Heart right ventricle (tissue), 16 donors: ENCODE measurements at regions of chr20 and their contacts with region 1.

Region 1: DNA sequence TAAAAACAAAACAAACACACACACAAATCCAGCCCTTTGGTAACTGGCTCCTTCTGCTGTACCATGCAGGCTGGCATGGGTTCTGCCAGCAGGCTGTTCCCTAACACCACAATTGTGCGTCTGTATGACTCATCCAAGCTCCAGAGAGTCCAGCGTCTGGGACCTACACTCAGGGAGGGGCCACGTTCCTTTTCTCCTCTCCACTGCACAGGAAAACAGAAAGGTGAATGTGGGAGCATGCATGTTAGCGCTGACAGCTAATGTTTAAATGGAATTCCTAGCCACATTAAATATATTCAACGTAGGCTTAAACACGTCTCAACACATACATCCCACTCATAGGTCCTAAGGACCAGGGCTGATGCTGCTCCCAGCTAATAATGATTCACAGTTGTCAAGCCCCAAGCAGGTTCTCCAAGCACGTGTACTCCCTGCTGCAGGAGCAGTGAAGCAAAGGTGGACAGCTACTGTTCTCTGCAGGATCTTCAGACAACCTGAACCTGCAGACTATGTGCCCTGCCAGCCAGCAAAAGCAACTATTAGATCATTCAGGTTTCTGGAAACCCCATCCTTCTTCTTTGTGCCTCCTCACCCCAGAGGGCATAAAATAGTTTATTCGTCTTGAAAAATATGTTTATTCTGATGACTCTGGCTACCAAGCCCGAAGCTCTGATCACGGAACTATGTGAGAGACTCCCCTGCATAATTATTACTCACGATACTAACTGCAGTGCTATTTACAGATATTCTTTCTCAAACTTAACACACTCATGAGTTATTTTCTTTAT is 20.9 kb downstream of the MAP1LC3A start:
- DNase-seq: peak; percentile 56 to 60
- ATAC-seq: peak; percentile 80 to 94 (median 90)
- H3K4me3 ChIP-seq: no peak overlapping the region
- H3K27ac ChIP-seq: peak overlapping the region; percentile 51 to 86 (median 76)
- H3K4me1 ChIP-seq: peaks cover 11 to 59% (median 54%) of the 10 kb centered on the region in 9 donors
- H3K27me3 ChIP-seq: no peaks in the 10 kb centered on the region
- CTCF ChIP-seq: peak in 8 of 9 donors; percentile 27 to 72 (median 52)

Region 2: GRCh38 chr20:34744847-34745246 is 165.5 kb after region 1 on chr20:
- intact Hi-C with region 1: loop called in 1 of 10 experiments (anchors 5 kb)
- DNase-seq: peak in 1 of 2 donors; percentile 49
- ATAC-seq: peak; percentile 69 to 95 (median 88)
- H3K4me3 ChIP-seq: no peak overlapping the region
- H3K27ac ChIP-seq: peak overlapping the region in 8 of 10 donors; percentile 11 to 65 (median 44)
- H3K4me1 ChIP-seq: peaks cover 0 to 29% (median 12%) of the 10 kb centered on the region in 9 donors
- H3K27me3 ChIP-seq: no peaks in the 10 kb centered on the region
- CTCF ChIP-seq: no peak

Region 3: DNA sequence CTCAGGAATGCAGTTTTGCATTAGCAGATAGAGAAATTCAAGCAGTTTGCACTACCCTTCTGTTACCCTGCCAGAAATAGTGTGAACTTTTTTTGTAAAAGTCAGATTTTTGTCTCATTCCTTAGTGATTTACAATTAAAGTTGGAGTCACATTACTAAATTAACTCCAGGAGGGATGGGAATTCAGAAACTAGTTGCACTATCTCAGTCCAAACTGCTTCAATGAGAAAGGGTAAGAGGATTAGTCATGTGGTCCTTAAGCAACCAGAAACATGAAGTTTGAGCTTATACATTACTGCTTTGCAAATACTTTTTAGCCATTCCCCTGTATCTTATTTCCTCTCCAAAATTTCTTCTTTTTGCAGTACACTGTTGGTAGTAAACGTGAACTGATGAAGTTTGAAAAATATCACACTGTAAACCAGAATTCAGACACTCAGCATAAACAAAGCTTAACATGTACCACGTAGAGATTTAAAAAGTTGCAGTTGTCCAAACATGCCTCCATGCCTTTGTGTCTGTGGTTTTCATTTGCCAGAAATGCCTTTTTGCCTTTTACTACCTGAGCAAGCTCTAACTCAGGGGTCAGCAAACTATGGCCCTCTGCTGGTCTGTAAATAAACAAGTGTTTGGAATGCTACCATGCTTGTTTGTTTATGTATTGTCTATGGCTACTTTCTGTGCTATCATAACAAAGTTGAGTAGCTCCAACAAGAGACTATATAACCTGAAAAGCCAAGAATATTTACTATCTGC is 174.5 kb after region 1 on chr20:
- intact Hi-C with region 1: loop called in 1 of 10 experiments (anchors 5 kb)
- DNase-seq: no peak
- ATAC-seq: no peak
- H3K4me3 ChIP-seq: no peak overlapping the region
- H3K27ac ChIP-seq: no peak overlapping the region
- H3K4me1 ChIP-seq: no peaks in the 10 kb centered on the region
- H3K27me3 ChIP-seq: no peaks in the 10 kb centered on the region
- CTCF ChIP-seq: peak in 3 of 9 donors; percentile 19 to 27 (median 23)

Region 4: GRCh38 chr20:34768096-34768495 is 188.7 kb after region 1 on chr20:
- intact Hi-C with region 1: loop called in 6 of 10 experiments (anchors 5 to 10 kb)
- DNase-seq: no peak
- ATAC-seq: no peak
- H3K4me3 ChIP-seq: no peak overlapping the region
- H3K27ac ChIP-seq: no peak overlapping the region
- H3K4me1 ChIP-seq: peaks cover 0 to 7% (median 0%) of the 10 kb centered on the region in 9 donors
- H3K27me3 ChIP-seq: no peaks in the 10 kb centered on the region
- CTCF ChIP-seq: no peak